Mammary epithelial cell (primary cell): ENCODE measurements at regions of chr22 and their contacts with region 1.

Region 1: GRCh38 chr22:31465307-31465706 is 24.3 kb downstream of the EIF4ENIF1 start:
- DNase-seq: no peak
- H3K4me3 ChIP-seq: no peak overlapping the region
- H3K27ac ChIP-seq: no peak overlapping the region
- H3K4me1 ChIP-seq: no peaks in the 10 kb centered on the region
- H3K27me3 ChIP-seq: no peaks in the 10 kb centered on the region
- CTCF ChIP-seq: no peak

Region 2: DNA sequence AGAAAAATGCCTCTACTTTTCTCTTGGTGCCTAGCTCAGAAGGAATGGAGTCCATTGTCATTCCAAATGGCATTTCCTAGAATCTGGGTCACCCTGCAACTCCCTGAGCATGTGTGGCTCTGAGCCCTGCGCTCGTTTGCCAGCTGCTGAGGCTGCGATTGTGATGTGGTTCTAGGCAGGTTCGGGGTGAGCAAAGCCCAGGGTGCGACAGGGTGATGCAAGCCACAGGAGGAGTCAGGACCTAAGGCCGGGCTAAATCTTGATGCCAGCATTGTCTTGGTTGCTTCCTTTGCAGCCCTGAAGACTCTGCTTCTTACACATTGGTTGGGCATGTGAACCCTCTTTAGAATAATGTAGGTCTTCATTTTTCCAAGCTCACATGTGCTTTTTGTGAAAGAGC is 627.8 kb before region 1 on chr22:
- CTCF ChIA-PET with region 1: no interaction called
- dilution Hi-C with region 1: no loop called
- in situ Hi-C with region 1: no loop called
- intact Hi-C with region 1: no loop called
- DNase-seq: no peak
- H3K4me3 ChIP-seq: no peak overlapping the region
- H3K27ac ChIP-seq: no peak overlapping the region
- H3K4me1 ChIP-seq: peaks cover 28% of the 10 kb centered on the region
- H3K27me3 ChIP-seq: no peaks in the 10 kb centered on the region
- CTCF ChIP-seq: no peak

Region 3: GRCh38 chr22:31345331-31346254 is 119.7 kb before region 1 on chr22:
- CTCF ChIA-PET with region 1: no interaction called
- dilution Hi-C with region 1: loop called (anchors 5 kb)
- in situ Hi-C with region 1: no loop called
- intact Hi-C with region 1: no loop called
- DNase-seq: peak; percentile 69
- H3K4me3 ChIP-seq: peak overlapping the region; percentile 54 to 66 (median 55)
- H3K27ac ChIP-seq: no peak overlapping the region
- H3K4me1 ChIP-seq: peaks cover 38% of the 10 kb centered on the region
- H3K27me3 ChIP-seq: no peaks in the 10 kb centered on the region
- CTCF ChIP-seq: peak; percentile 63 to 77

Region 4: DNA sequence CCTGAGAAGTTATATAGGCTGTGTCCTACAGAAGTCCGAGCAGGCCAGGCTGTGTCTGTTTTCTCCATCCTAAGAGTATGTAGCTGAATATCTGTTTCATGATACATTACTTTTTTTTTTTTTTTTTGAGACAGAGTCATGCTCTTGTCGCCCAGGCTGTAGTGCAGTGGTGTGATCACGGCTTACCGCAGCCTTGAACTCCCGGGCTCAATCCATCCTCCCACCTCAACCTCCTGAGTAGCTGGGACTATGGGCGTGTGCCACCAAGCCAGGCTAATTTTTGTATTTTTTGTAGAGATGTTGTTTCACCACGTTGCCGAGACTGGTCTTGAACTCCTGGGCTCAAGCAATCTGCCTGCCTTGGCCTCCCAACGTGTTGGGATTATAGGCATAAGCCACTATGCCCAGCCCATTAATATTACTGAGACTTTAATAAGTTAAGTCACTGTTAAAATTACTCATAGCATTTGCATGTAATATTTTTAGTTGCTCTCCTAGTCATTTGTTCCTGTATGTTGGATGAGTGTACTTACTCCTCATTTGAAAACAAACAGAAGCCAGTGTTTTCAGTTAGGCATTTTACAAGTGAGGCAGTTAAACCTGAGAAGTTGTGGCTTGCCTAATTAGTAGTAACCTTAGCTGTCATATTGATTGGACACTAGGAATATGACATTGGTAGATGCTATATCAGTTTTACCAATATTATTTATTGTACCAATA is 39.8 kb before region 1 on chr22:
- CTCF ChIA-PET with region 1: no interaction called
- dilution Hi-C with region 1: loop called (anchors 5 kb)
- in situ Hi-C with region 1: no loop called
- intact Hi-C with region 1: no loop called
- DNase-seq: no peak
- H3K4me3 ChIP-seq: no peak overlapping the region
- H3K27ac ChIP-seq: no peak overlapping the region
- H3K4me1 ChIP-seq: no peaks in the 10 kb centered on the region
- H3K27me3 ChIP-seq: no peaks in the 10 kb centered on the region
- CTCF ChIP-seq: no peak

Region 5: DNA sequence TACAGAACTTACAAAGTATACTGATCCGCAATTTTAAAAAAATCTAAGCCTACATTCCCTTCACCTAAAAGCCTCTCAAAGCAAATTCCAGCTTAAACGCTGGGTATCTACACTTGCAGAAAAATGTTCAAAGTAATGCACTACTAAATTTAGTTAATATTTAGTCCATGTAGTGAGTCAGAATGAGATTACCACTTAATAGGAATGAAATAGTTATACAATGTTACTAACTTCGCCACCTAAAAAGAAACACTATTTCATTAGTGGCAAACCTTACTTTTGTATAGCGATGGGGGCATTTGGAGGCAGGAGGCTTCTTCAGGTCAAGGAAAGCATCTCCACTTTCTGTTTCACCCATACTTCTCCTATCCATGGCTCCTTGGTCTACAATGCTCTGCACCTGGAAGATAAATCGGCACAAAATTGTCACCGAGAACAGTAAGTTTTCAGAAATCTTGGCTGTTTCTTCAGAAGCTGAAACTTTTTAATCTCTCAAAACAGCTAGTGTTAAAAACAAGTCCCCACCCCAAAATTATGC is 23.1 kb after region 1 on chr22:
- CTCF ChIA-PET with region 1: no interaction called
- dilution Hi-C with region 1: no loop called
- in situ Hi-C with region 1: no loop called
- intact Hi-C with region 1: no loop called
- DNase-seq: no peak
- H3K4me3 ChIP-seq: peak overlapping the region; percentile 77 to 92 (median 91)
- H3K27ac ChIP-seq: peak overlapping the region; percentile 47
- H3K4me1 ChIP-seq: peaks cover 16% of the 10 kb centered on the region
- H3K27me3 ChIP-seq: no peaks in the 10 kb centered on the region
- CTCF ChIP-seq: no peak

Region 6: GRCh38 chr22:31544481-31545480 is 79.5 kb after region 1 on chr22:
- CTCF ChIA-PET with region 1: no interaction called
- dilution Hi-C with region 1: loop called (anchors 5 kb)
- in situ Hi-C with region 1: no loop called
- intact Hi-C with region 1: no loop called
- DNase-seq: no peak
- H3K4me3 ChIP-seq: no peak overlapping the region
- H3K27ac ChIP-seq: no peak overlapping the region
- H3K4me1 ChIP-seq: no peaks in the 10 kb centered on the region
- H3K27me3 ChIP-seq: no peaks in the 10 kb centered on the region
- CTCF ChIP-seq: no peak